Prostate gland (tissue), 2 donors: ENCODE measurements at regions of chr5 and their contacts with region 1.

Region 1: GRCh38 chr5:113574417-113574816 is 60.9 kb downstream of the YTHDC2 start:
- DNase-seq: no peak
- H3K4me3 ChIP-seq: no peak overlapping the region
- H3K27ac ChIP-seq: no peak overlapping the region
- H3K4me1 ChIP-seq: no peaks in the 10 kb centered on the region
- H3K27me3 ChIP-seq: no peaks in the 10 kb centered on the region
- CTCF ChIP-seq: no peak
- POLR2A ChIP-seq: no peak

Region 2: GRCh38 chr5:114402206-114402605 is 827.8 kb after region 1 on chr5:
- intact Hi-C with region 1: loop called (anchors 5 kb)
- DNase-seq: no peak
- H3K4me3 ChIP-seq: no peak overlapping the region
- H3K27ac ChIP-seq: no peak overlapping the region
- H3K4me1 ChIP-seq: no peaks in the 10 kb centered on the region
- H3K27me3 ChIP-seq: no peaks in the 10 kb centered on the region
- CTCF ChIP-seq: no peak
- POLR2A ChIP-seq: no peak